ENCODE measurements at regions of chr9 and their contacts with region 1.

Region 1: GRCh38 chr9:134407123-134407808 is 81.0 kb downstream of the RXRA start:
- DNase-seq: peak; percentile 92 to 93
- ATAC-seq: peak; percentile 73 to 85 (median 76)
- H3K4me3 ChIP-seq: peak overlapping the region in 8 of 10 donors; percentile 11 to 49 (median 32)
- H3K27ac ChIP-seq: peak overlapping the region in 9 of 10 donors; percentile 80 to 92 (median 86)
- H3K4me1 ChIP-seq: peaks cover 80 to 100% (median 99%) of the 10 kb centered on the region in 9 donors
- H3K27me3 ChIP-seq: no peaks in the 10 kb centered on the region
- CTCF ChIP-seq: no peak

Region 2: GRCh38 chr9:134333234-134333873 is 73.9 kb before region 1 on chr9:
- intact Hi-C with region 1: loop called in 3 of 10 experiments (anchors 5 to 10 kb)
- DNase-seq: peak in 1 of 2 donors; percentile 34
- ATAC-seq: no peak
- H3K4me3 ChIP-seq: peak overlapping the region in 2 of 10 donors; percentile 1 to 18
- H3K27ac ChIP-seq: peak overlapping the region in 8 of 10 donors; percentile 1 to 84 (median 44)
- H3K4me1 ChIP-seq: peaks cover 78 to 100% (median 99%) of the 10 kb centered on the region in 9 donors
- H3K27me3 ChIP-seq: no peaks in the 10 kb centered on the region
- CTCF ChIP-seq: no peak

Region 3: DNA sequence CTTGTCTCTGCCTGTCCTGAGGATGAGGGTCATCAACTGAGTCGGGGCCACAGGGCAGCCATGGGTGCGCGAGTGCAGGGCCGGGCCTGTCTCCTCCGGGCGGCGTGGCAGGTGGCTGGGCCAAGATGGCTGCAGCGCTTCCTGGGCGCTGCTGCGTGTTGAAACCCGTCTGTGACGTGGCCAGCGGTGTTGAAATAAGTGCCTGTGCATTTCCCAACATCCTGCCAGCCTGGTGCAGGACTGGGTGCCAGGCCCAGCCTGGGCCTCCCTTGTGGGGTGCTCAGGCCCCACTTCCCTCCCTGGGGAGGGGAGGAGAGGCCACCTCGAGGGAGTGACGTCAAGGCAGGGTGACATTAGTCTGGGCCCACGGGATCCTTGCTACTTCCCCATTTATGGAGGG is 35.5 kb before region 1 on chr9:
- intact Hi-C with region 1: loop called in 3 of 10 experiments (anchors 2 to 5 kb)
- DNase-seq: peak; percentile 46 to 73
- ATAC-seq: peak in 7 of 8 donors; percentile 9 to 37 (median 17)
- H3K4me3 ChIP-seq: no peak overlapping the region
- H3K27ac ChIP-seq: peak overlapping the region in 8 of 10 donors; percentile 7 to 98 (median 64)
- H3K4me1 ChIP-seq: peaks cover 73 to 94% (median 92%) of the 10 kb centered on the region in 9 donors
- H3K27me3 ChIP-seq: no peaks in the 10 kb centered on the region
- CTCF ChIP-seq: no peak

Region 4: GRCh38 chr9:134434894-134435506 is 27.7 kb after region 1 on chr9:
- intact Hi-C with region 1: loop called in 2 of 10 experiments (anchors 5 kb)
- DNase-seq: peak; percentile 92 to 97
- ATAC-seq: peak; percentile 76 to 92 (median 88)
- H3K4me3 ChIP-seq: peak overlapping the region in 5 of 10 donors; percentile 8 to 28 (median 12)
- H3K27ac ChIP-seq: peak overlapping the region; percentile 65 to 90 (median 82)
- H3K4me1 ChIP-seq: peaks cover 42 to 90% (median 83%) of the 10 kb centered on the region in 9 donors
- H3K27me3 ChIP-seq: no peaks in the 10 kb centered on the region
- CTCF ChIP-seq: no peak

Measured in heart right ventricle (tissue), 16 donors.